ENCODE measurements at regions of chr15 and their contacts with region 1.

Region 1: GRCh38 chr15:68537107-68537905 is 41.5 kb upstream of the CORO2B start:
- DNase-seq: no peak
- ATAC-seq: peak; percentile 73
- H3K4me3 Mint-ChIP-seq: no peak overlapping the region
- H3K27ac Mint-ChIP-seq: no peak overlapping the region
- H3K4me1 Mint-ChIP-seq: no peaks in the 10 kb centered on the region
- H3K27me3 Mint-ChIP-seq: peaks cover 6% of the 10 kb centered on the region
- CTCF ChIP-seq: no peak

Region 2: GRCh38 chr15:68431792-68432401 is 105.4 kb before region 1 on chr15 and contains the start of gene ITGA11:
- CTCF ChIA-PET with region 1: interaction called, 13 read pairs
- POLR2A ChIA-PET with region 1: no interaction called
- DNase-seq: peak; percentile 79
- ATAC-seq: peak; percentile 93
- H3K4me3 Mint-ChIP-seq: peak within 1 kb of the TSS; percentile 72
- H3K27ac Mint-ChIP-seq: no peak within 1 kb of the TSS
- H3K4me1 Mint-ChIP-seq: peaks cover 13% of the 10 kb centered on the region
- H3K27me3 Mint-ChIP-seq: peaks cover 72% of the 10 kb centered on the region
- CTCF ChIP-seq: no peak
- total RNA-seq, gene ITGA11: 0.11 to 0.60 TPM (median 0.15 TPM) in 3 replicates

Region 3: GRCh38 chr15:68494573-68495110 is 42.7 kb before region 1 on chr15:
- CTCF ChIA-PET with region 1: no interaction called
- POLR2A ChIA-PET with region 1: no interaction called
- DNase-seq: no peak
- ATAC-seq: no peak
- H3K4me3 Mint-ChIP-seq: no peak overlapping the region
- H3K27ac Mint-ChIP-seq: no peak overlapping the region
- H3K4me1 Mint-ChIP-seq: no peaks in the 10 kb centered on the region
- H3K27me3 Mint-ChIP-seq: peaks cover 3% of the 10 kb centered on the region; the same call in 1 of the 2 replicates
- CTCF ChIP-seq: no peak

Region 4: DNA sequence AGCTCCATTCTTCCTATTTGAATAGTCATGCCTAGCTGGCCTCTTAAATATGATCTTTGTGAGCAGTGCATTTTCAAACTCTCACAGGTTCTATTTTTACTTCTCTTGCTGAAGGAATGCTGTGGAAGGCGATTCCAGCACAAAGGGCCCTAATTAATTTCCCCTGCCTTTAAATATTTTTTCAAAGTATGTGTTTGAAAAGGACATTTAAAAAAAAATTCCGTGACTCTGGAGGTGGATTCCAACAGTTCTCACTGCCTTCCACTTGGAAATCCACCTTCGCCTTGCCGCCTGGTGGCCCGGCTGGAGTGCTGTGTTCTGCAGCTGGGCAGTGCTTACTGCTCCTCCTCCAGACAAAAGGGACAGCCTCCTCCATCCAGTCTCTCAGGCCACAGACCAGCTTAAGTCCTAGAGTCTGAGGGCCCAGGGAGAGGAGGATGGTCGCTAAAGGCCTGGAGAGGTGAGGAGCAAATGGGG is 20.0 kb before region 1 on chr15:
- CTCF ChIA-PET with region 1: interaction called, 15 read pairs
- POLR2A ChIA-PET with region 1: no interaction called
- DNase-seq: peak; percentile 41
- ATAC-seq: peak; percentile 81
- H3K4me3 Mint-ChIP-seq: no peak overlapping the region
- H3K27ac Mint-ChIP-seq: no peak overlapping the region
- H3K4me1 Mint-ChIP-seq: peaks cover 28% of the 10 kb centered on the region
- H3K27me3 Mint-ChIP-seq: no peaks in the 10 kb centered on the region
- CTCF ChIP-seq: no peak

Measured in WTC11 (cell line).